ENCODE measurements at regions of chr11 and their contacts with region 1.

Region 1: DNA sequence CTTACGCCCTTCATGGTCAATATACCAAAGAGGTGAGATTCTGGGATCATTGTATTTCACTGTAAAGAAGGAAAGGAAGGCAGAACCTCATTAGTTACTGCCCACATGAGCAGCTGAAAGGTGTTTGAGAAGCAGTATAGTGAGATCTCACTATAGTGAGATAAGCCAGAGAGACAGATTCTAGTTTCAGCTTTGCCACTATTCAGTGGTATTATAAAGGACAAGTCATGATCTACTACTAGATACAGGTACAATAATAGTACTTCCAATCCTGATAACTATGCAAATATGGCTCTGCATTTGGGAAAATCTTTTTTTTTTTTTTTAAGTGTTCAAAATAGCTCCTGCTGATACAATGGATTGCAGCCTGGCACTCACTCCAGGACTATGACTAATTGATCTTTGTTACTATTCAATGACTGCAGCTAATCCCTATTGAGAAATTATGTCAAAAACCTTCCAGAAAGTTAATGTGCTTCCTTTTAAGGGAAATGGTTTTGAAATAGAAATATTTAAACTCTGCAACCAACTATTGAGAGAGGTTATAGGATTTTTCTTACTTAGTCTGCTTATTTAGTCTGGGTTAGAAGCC is 8.3 kb upstream of the DLAT start:
- DNase-seq: no peak
- ATAC-seq: peak; percentile 35
- H3K4me3 ChIP-seq: no peak overlapping the region
- H3K27ac ChIP-seq: peak overlapping the region; percentile 38
- H3K4me1 ChIP-seq: peaks cover 23% of the 10 kb centered on the region
- H3K27me3 ChIP-seq: no peaks in the 10 kb centered on the region
- CTCF ChIP-seq: no peak
- EP300 ChIP-seq: no peak
- POLR2A ChIP-seq: no peak
- RAD21 ChIP-seq: no peak

Region 2: GRCh38 chr11:112004389-112004788 is 12.5 kb before region 1 on chr11:
- CTCF ChIA-PET with region 1: no interaction called
- POLR2A ChIA-PET with region 1: interaction called, 24 read pairs
- in situ Hi-C with region 1: no loop called
- intact Hi-C with region 1: no loop called
- DNase-seq: peak; percentile 15
- ATAC-seq: peak; percentile 85
- H3K4me3 ChIP-seq: no peak overlapping the region
- H3K27ac ChIP-seq: no peak overlapping the region
- H3K4me1 ChIP-seq: peaks cover 20% of the 10 kb centered on the region
- H3K27me3 ChIP-seq: no peaks in the 10 kb centered on the region
- CTCF ChIP-seq: peak; percentile 51
- EP300 ChIP-seq: no peak
- POLR2A ChIP-seq: no peak
- RAD21 ChIP-seq: no peak

Measured in HepG2 (cell line).